OCI-LY7 (cell line): ENCODE measurements at regions of chr21 and their contacts with region 1.

Region 1: GRCh38 chr21:33219954-33220353 is 9.8 kb upstream of the IFNAR2 start:
- DNase-seq: no peak
- H3K4me3 ChIP-seq: no peak overlapping the region
- H3K27ac ChIP-seq: no peak overlapping the region
- H3K4me1 ChIP-seq: peaks cover 44% of the 10 kb centered on the region
- CTCF ChIP-seq: no peak

Region 2: GRCh38 chr21:33455686-33456446 is 235.9 kb after region 1 on chr21:
- CTCF ChIA-PET with region 1: no interaction called
- POLR2A ChIA-PET with region 1: interaction called, 12 read pairs
- intact Hi-C with region 1: no loop called
- DNase-seq: no peak
- H3K4me3 ChIP-seq: no peak overlapping the region
- H3K27ac ChIP-seq: no peak overlapping the region
- H3K4me1 ChIP-seq: no peaks in the 10 kb centered on the region
- CTCF ChIP-seq: no peak